ENCODE measurements at regions of chr10 and their contacts with region 1.

Region 1: GRCh38 chr10:102583435-102584417 is 60.6 kb upstream of the TRIM8 start:
- DNase-seq: peak; percentile 91
- ATAC-seq: peak; percentile 98
- H3K4me3 Mint-ChIP-seq: no peak overlapping the region
- H3K27ac Mint-ChIP-seq: no peak overlapping the region
- H3K4me1 Mint-ChIP-seq: peaks cover 5% of the 10 kb centered on the region
- H3K27me3 Mint-ChIP-seq: no peaks in the 10 kb centered on the region

Region 2: GRCh38 chr10:102394079-102394800 is 189.5 kb before region 1 on chr10:
- CTCF ChIA-PET with region 1: interaction called, 12 read pairs
- DNase-seq: peak; percentile 99
- ATAC-seq: peak; percentile 88
- H3K4me3 Mint-ChIP-seq: peak overlapping the region; percentile 84
- H3K27ac Mint-ChIP-seq: peak overlapping the region; percentile 90
- H3K4me1 Mint-ChIP-seq: peaks cover 38% of the 10 kb centered on the region
- H3K27me3 Mint-ChIP-seq: no peaks in the 10 kb centered on the region

Region 3: GRCh38 chr10:102476466-102477141 is 107.1 kb before region 1 on chr10:
- CTCF ChIA-PET with region 1: interaction called, 11 read pairs
- DNase-seq: no peak
- ATAC-seq: no peak
- H3K4me3 Mint-ChIP-seq: no peak overlapping the region
- H3K27ac Mint-ChIP-seq: peak overlapping the region; percentile 52
- H3K4me1 Mint-ChIP-seq: peaks cover 12% of the 10 kb centered on the region
- H3K27me3 Mint-ChIP-seq: no peaks in the 10 kb centered on the region

Region 4: GRCh38 chr10:102503281-102504220 is 80.2 kb before region 1 on chr10 and contains the start of gene SUFU:
- CTCF ChIA-PET with region 1: interaction called, 138 read pairs
- DNase-seq: peak; percentile 99
- ATAC-seq: peak; percentile 78
- H3K4me3 Mint-ChIP-seq: no peak within 1 kb of the TSS
- H3K27ac Mint-ChIP-seq: peak within 1 kb of the TSS; percentile 78
- H3K4me1 Mint-ChIP-seq: peaks cover 28% of the 10 kb centered on the region
- H3K27me3 Mint-ChIP-seq: no peaks in the 10 kb centered on the region
- total RNA-seq, gene SUFU: 9.8 to 12.9 TPM

Region 5: DNA sequence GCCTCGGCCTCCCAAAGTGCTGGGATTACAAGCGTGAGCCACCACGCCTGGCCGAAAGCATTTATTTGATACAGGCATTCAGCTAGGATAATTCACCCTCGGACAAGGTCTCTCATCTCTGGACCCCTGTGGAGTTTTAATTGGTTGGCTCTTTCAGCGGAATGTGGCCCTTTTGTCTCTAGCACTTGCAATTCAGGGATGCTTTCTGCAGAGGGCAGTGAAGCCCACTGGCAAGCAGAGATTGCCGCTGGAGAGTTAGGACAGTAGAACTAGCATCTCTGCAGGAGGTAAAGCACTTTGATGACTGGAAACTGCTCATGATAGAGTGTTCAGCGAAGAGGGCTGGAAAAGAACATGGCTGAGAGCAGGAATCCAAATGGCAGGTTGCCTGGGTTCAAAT is 17.9 kb before region 1 on chr10:
- CTCF ChIA-PET with region 1: interaction called, 11 read pairs
- DNase-seq: no peak
- ATAC-seq: no peak
- H3K4me3 Mint-ChIP-seq: no peak overlapping the region
- H3K27ac Mint-ChIP-seq: no peak overlapping the region
- H3K4me1 Mint-ChIP-seq: peaks cover 6% of the 10 kb centered on the region
- H3K27me3 Mint-ChIP-seq: no peaks in the 10 kb centered on the region

Measured in activated CD8-positive, alpha-beta memory T cell treated with anti-CD3 and anti-CD28 coated beads, Interleukin-2, amount 10 ng/mL, durations not matched to agents 7 days and 5 days (primary cell).